Activated CD4-positive, alpha-beta T cell treated with anti-CD3 and anti-CD28 coated beads for 36 hours (primary cell): ENCODE measurements at regions of chrX and their contacts with region 1.

Region 1: DNA sequence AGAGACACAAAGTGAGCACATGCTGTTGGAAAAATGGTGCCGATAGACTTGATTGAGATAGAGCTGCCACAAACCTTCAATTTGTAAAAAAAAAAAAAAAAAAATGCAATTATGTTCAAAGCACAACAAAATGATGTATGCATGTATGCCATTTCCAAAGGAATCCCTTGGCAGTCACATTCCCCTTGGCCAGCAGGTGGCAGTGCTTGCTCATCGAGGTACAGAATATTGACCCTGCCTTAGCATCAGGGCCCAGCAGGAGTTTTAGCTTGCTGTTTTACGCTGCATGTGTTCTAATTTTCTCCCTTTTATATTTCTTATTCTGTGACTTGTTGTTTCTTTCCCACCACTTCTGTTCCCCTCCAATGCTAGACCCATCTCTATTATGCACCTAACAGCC is 34.5 kb upstream of the CYBB start:
- DNase-seq: peak; percentile 84
- ATAC-seq: peak; percentile 56
- H3K4me3 Mint-ChIP-seq: no peak overlapping the region
- H3K27ac Mint-ChIP-seq: no peak overlapping the region
- H3K4me1 Mint-ChIP-seq: peaks cover 19% of the 10 kb centered on the region
- H3K27me3 Mint-ChIP-seq: no peaks in the 10 kb centered on the region

Region 2: DNA sequence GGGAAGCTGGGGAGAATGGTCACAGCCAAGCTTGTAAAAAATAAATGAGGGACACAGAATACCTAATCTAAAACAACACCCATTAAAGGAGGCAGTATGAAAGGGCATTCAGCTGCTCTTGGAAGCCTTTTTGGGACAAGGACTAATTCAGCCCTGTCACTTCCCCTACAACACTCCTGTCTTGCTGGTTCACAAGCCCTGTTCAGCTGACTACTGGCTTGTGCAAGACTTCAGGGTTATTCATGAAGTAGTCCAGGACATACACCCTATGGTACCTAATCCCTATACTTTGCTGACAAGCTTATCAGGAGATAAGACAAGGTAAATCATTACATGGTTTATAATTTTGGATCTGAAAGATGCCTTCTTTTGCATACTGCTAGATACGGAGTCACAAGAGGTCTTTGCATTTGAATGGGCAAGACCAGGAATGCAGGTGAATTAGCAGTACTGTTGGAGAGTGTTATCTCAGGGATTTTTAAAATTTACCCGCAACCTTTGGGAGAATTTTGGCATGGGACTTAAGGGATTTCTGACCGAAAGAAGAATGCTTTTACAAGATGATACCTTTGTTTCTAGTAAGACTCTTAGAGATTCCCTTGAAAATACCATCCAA is 277.1 kb before region 1 on chrX:
- CTCF ChIA-PET with region 1: no interaction called
- POLR2A ChIA-PET with region 1: no interaction called
- intact Hi-C with region 1: no loop called
- DNase-seq: no peak
- ATAC-seq: no peak
- H3K4me3 Mint-ChIP-seq: no peak overlapping the region
- H3K27ac Mint-ChIP-seq: no peak overlapping the region
- H3K4me1 Mint-ChIP-seq: no peaks in the 10 kb centered on the region
- H3K27me3 Mint-ChIP-seq: no peaks in the 10 kb centered on the region

Region 3: DNA sequence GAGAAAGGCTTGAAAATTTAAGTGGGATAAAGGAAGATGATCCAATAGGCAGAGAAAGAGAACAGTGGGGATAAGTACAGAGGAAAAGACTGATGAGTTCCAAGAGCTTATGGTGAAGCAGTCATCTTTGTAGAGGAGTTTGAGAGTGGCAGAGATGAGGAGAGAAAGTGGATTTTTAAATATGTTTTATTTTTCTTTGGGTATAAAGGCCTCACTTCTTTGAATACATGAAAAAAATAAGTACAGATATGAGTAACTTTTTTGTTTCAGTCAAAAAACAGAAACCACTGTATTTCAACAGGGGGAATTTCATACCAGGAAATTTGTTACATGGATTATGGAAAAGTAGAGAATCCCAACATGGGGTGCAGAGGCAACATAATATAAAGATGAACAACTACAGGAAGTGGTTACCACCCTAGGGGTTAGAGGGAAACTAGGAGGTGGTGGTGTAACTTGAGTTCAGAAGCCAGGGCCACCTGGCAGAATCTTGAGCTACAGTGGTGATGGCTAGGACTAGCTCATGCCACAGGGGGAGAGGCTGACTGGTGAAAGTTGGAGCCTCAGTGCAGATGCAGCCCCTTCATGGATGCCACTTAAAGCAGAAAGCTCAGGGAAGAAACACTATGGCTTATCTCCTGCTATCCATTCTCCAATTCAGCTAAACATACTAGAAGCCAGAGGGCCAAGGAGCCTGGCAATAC is 31.1 kb after region 1 on chrX:
- CTCF ChIA-PET with region 1: interaction called, 3 read pairs
- POLR2A ChIA-PET with region 1: no interaction called
- intact Hi-C with region 1: loop called in 1 of 2 experiments (anchors 2 kb)
- DNase-seq: peak; percentile 11
- ATAC-seq: peak; percentile 82
- H3K4me3 Mint-ChIP-seq: no peak overlapping the region
- H3K27ac Mint-ChIP-seq: no peak overlapping the region
- H3K4me1 Mint-ChIP-seq: peaks cover 21% of the 10 kb centered on the region
- H3K27me3 Mint-ChIP-seq: no peaks in the 10 kb centered on the region

Region 4: DNA sequence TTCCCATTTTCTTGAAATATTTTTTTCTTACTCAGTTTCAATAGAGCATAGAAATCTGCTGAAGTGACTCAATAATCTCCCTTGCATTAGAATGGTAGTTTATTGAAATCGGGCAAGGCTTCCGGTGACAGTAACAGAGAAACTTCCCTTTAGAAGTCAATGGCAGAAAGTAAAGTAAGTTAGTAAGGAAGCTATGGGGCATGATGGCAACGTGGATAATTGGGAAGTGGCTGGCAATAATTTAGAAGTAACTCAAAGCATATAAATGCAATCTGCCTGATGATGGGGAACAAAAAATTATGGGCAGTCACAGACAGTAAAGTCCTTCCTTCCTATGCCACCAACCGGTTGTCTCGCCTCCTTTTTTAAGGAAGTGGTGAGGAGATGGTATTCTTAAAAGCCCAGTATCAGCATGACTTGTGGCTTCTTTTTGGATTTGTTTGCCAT is 42.1 kb after region 1 on chrX:
- CTCF ChIA-PET with region 1: interaction called, 3 read pairs
- POLR2A ChIA-PET with region 1: interaction called, 3 read pairs
- intact Hi-C with region 1: loop called in 1 of 2 experiments (anchors 5 kb)
- DNase-seq: no peak
- ATAC-seq: no peak
- H3K4me3 Mint-ChIP-seq: no peak overlapping the region
- H3K27ac Mint-ChIP-seq: no peak overlapping the region
- H3K4me1 Mint-ChIP-seq: peaks cover 29% of the 10 kb centered on the region
- H3K27me3 Mint-ChIP-seq: no peaks in the 10 kb centered on the region

Region 5: DNA sequence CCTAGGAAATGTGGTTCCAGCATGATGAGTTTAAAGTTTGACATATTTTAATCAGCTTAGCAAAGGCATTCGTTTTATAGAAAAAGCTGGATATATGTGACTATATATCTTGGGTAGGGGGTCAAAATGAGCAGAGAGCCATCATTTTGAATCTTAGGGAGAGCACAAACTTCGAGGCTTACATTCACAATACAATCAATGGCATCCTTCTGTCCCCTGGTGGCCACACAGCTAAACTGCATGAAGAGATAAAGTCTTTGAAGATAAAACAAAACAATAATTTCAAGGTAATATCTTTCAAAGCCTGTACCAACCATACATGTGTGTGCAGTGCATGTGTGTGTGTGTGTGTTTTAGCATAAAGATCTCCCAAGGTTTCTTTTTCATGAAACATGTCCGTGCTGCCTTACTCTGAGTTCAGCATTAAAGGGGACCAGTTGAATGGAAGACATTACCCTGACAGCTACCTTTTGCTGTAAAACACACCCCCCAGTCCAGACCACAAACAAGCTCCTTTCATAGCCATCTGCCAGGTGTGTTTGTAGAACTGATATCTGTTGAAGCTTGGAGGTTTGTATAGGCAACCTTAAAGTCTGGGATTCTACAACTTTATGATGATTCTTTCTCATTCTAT is 80.0 kb after region 1 on chrX:
- CTCF ChIA-PET with region 1: interaction called, 119 read pairs
- POLR2A ChIA-PET with region 1: no interaction called
- intact Hi-C with region 1: loop called (anchors 1 kb)
- DNase-seq: peak; percentile 66
- ATAC-seq: peak; percentile 47
- H3K4me3 Mint-ChIP-seq: no peak overlapping the region
- H3K27ac Mint-ChIP-seq: no peak overlapping the region
- H3K4me1 Mint-ChIP-seq: peaks cover 22% of the 10 kb centered on the region
- H3K27me3 Mint-ChIP-seq: no peaks in the 10 kb centered on the region

Region 6: GRCh38 chrX:37846934-37847732 is 101.8 kb after region 1 on chrX and contains the start of gene DYNLT3:
- CTCF ChIA-PET with region 1: interaction called, 5 read pairs
- POLR2A ChIA-PET with region 1: interaction called, 3 read pairs
- intact Hi-C with region 1: loop called (anchors 1 to 2 kb)
- DNase-seq: peak; percentile 88
- ATAC-seq: peak; percentile 93
- H3K4me3 Mint-ChIP-seq: peak within 1 kb of the TSS; percentile 69
- H3K27ac Mint-ChIP-seq: peak within 1 kb of the TSS; percentile 87
- H3K4me1 Mint-ChIP-seq: peaks cover 27% of the 10 kb centered on the region
- H3K27me3 Mint-ChIP-seq: no peaks in the 10 kb centered on the region
- total RNA-seq, gene DYNLT3: 16.1 to 16.8 TPM

Region 7: GRCh38 chrX:38166478-38167083 is 421.2 kb after region 1 on chrX:
- CTCF ChIA-PET with region 1: interaction called, 3 read pairs
- POLR2A ChIA-PET with region 1: no interaction called
- intact Hi-C with region 1: loop called (anchors 1 to 5 kb)
- DNase-seq: peak; percentile 18
- ATAC-seq: no peak
- H3K4me3 Mint-ChIP-seq: no peak overlapping the region
- H3K27ac Mint-ChIP-seq: no peak overlapping the region
- H3K4me1 Mint-ChIP-seq: no peaks in the 10 kb centered on the region
- H3K27me3 Mint-ChIP-seq: peaks cover 2% of the 10 kb centered on the region